HEK293 (cell line): ENCODE measurements at regions of chr14 and their contacts with region 1.

Region 1: GRCh38 chr14:24241829-24242443 is 487 bp downstream of the TINF2 start:
- H3K4me3 ChIP-seq: peak overlapping the region; percentile 78
- H3K27ac ChIP-seq: peak overlapping the region; percentile 75
- H3K4me1 ChIP-seq: no peaks in the 10 kb centered on the region
- CTCF ChIP-seq: peak; percentile 84

Region 2: GRCh38 chr14:24114536-24115450 is 127.1 kb before region 1 on chr14 and contains the starts of genes DCAF11 and NRL:
- CTCF ChIA-PET with region 1: interaction called, 4 read pairs
- POLR2A ChIA-PET with region 1: interaction called, 10 read pairs
- H3K4me3 ChIP-seq: peak within 1 kb of the TSS; percentile 98
- H3K27ac ChIP-seq: peak within 1 kb of the TSS; percentile 94
- H3K4me1 ChIP-seq: no peaks in the 10 kb centered on the region
- CTCF ChIP-seq: no peak

Region 3: GRCh38 chr14:24215495-24216344 is 26.2 kb before region 1 on chr14 and contains the start of gene MDP1:
- CTCF ChIA-PET with region 1: interaction called, 3 read pairs
- POLR2A ChIA-PET with region 1: interaction called, 34 read pairs
- H3K4me3 ChIP-seq: peak within 1 kb of the TSS; percentile 81
- H3K27ac ChIP-seq: peak within 1 kb of the TSS; percentile 76
- H3K4me1 ChIP-seq: no peaks in the 10 kb centered on the region
- CTCF ChIP-seq: peak; percentile 93

Region 4: GRCh38 chr14:24271134-24271833 is 29.3 kb after region 1 on chr14 and contains the start of gene RABGGTA:
- CTCF ChIA-PET with region 1: interaction called, 15 read pairs
- POLR2A ChIA-PET with region 1: interaction called, 47 read pairs
- H3K4me3 ChIP-seq: peak within 1 kb of the TSS; percentile 92
- H3K27ac ChIP-seq: peak within 1 kb of the TSS; percentile 94
- H3K4me1 ChIP-seq: peaks cover 3% of the 10 kb centered on the region; the same call in 1 of the 2 replicates
- CTCF ChIP-seq: peak; percentile 96

Region 5: DNA sequence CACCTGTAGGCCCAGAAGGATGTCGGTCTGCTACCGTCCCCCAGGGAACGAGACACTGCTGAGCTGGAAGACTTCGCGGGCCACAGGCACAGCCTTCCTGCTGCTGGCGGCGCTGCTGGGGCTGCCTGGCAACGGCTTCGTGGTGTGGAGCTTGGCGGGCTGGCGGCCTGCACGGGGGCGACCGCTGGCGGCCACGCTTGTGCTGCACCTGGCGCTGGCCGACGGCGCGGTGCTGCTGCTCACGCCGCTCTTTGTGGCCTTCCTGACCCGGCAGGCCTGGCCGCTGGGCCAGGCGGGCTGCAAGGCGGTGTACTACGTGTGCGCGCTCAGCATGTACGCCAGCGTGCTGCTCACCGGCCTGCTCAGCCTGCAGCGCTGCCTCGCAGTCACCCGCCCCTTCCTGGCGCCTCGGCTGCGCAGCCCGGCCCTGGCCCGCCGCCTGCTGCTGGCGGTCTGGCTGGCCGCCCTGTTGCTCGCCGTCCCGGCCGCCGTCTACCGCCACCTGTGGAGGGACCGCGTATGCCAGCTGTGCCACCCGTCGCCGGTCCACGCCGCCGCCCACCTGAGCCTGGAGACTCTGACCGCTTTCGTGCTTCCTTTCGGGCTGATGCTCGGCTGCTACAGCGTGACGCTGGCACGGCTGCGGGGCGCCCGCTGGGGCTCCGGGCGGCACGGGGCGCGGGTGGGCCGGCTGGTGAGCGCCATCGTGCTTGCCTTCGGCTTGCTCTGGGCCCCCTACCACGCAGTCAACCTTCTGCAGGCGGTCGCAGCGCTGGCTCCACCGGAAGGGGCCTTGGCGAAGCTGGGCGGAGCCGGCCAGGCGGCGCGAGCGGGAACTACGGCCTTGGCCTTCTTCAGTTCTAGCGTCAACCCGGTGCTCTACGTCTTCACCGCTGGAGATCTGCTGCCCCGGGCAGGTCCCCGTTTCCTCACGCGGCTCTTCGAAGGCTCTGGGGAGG is 69.0 kb after region 1 on chr14 and contains the start of gene LTB4R:
- CTCF ChIA-PET with region 1: interaction called, 70 read pairs
- POLR2A ChIA-PET with region 1: interaction called, 15 read pairs
- H3K4me3 ChIP-seq: no peak within 1 kb of the TSS
- H3K27ac ChIP-seq: no peak within 1 kb of the TSS
- H3K4me1 ChIP-seq: no peaks in the 10 kb centered on the region
- CTCF ChIP-seq: no peak

Region 6: DNA sequence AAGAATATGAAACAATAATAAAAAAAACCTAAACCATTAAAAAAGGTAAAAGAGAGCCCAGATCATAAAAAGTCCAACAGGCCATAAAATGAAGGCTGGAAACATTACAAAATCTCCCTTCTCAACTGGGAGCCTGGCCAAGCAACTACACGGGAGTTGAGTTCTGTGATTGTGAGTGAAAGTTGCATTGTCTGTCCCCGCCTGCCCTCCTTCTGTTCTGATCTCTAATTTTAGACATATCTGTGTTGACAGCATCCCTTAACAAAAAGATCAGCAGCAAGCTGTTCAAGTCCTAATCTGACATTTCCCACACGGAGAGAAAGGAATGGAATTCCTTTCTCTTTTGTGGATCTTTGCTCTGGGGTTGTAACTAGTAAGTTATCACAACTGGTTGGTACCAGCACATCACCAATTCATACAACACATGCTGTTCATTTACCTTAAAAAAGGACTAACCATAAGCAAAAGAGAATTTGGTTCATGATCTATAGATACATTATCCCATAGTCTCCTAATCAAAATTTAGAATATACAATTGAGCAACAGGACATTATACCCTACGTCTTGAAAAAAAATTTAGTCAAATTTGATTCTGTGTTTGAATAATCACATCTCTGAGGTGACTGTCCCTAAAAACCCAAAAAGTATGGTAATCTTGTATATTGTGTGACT is 597.1 kb after region 1 on chr14:
- CTCF ChIA-PET with region 1: no interaction called
- POLR2A ChIA-PET with region 1: no interaction called
- H3K4me3 ChIP-seq: no peak overlapping the region
- H3K27ac ChIP-seq: no peak overlapping the region
- H3K4me1 ChIP-seq: peaks cover 2% of the 10 kb centered on the region; the same call in 1 of the 2 replicates
- CTCF ChIP-seq: no peak